ENCODE measurements at regions of chr7 and their contacts with region 1.

Region 1: GRCh38 chr7:130084037-130084875 is 13.9 kb downstream of the KLHDC10 start:
- DNase-seq: peak in 1 of 35 experiments; percentile 22
- ATAC-seq: no peak
- H3K4me3 ChIP-seq: no peak overlapping the region
- H3K4me3 Mint-ChIP-seq: no peak overlapping the region
- H3K27ac ChIP-seq: no peak overlapping the region
- H3K27ac Mint-ChIP-seq: no peak overlapping the region
- H3K4me1 ChIP-seq: no peaks in the 10 kb centered on the region
- H3K4me1 Mint-ChIP-seq: peaks cover 20 to 39% (median 28%) of the 10 kb centered on the region in 3 donors
- H3K27me3 ChIP-seq: no peaks in the 10 kb centered on the region
- H3K27me3 Mint-ChIP-seq: no peaks in the 10 kb centered on the region

Region 2: DNA sequence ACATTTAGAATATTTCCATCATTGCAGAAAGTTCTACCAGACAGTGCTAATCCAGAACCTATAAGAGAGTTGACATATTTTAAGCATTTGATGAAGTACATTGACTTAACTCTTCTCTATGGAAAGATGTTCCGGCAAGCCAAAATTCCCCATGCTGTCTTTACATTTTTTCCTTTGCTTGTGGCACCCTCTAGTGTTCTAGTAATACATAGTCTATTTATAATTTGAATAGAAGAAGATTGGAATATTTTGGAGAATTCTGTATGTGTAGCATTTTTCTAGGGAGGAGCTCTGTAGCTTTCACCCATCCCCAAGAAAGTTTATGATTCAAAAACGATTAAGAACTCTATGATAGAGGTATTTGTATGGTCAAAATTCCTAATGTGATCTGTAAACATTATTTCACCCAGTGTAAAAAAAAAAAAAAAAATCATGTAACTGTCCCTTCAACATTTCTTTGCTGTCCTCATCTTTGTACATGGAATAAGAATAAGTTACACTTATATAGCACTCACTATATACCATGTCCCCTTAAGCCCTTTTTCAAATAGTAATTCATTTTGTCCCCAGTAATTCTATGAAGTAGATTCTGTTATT is 439.5 kb before region 1 on chr7:
- CTCF ChIA-PET with region 1: no interaction called
- POLR2A ChIA-PET with region 1: interaction called in 1 of 2 experiments, 13 read pairs
- DNase-seq: peak in 1 of 35 experiments; percentile 43
- ATAC-seq: no peak
- H3K4me3 ChIP-seq: no peak overlapping the region
- H3K4me3 Mint-ChIP-seq: no peak overlapping the region
- H3K27ac ChIP-seq: no peak overlapping the region
- H3K27ac Mint-ChIP-seq: no peak overlapping the region
- H3K4me1 ChIP-seq: no peaks in the 10 kb centered on the region
- H3K4me1 Mint-ChIP-seq: peaks cover 20 to 37% (median 35%) of the 10 kb centered on the region in 3 donors
- H3K27me3 ChIP-seq: no peaks in the 10 kb centered on the region
- H3K27me3 Mint-ChIP-seq: no peaks in the 10 kb centered on the region

Region 3: DNA sequence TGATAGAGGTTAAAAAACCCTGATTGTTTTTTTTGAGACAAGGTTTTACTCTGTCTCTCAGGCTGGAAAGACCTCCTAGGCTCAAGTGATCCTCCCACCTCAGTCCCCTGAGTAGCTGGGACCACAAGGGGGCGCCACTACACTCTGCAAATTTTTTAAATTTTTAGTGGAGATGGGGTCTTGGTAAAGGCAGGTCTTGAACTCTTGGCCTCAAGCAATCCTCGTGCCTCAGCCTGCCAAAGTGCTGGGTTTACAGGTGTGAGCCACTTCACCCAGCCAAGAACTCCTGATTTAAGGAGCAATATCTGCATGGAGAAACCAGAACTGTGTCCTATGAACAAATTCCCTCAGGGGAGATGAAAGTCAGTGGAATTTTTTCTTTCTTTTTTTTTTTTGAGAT is 21.2 kb before region 1 on chr7:
- CTCF ChIA-PET with region 1: interaction called in 1 of 2 experiments, 12 read pairs
- POLR2A ChIA-PET with region 1: no interaction called
- DNase-seq: peak; percentile 7 to 74 (median 59)
- ATAC-seq: peak; percentile 43 to 72 (median 54)
- H3K4me3 ChIP-seq: no peak overlapping the region
- H3K4me3 Mint-ChIP-seq: no peak overlapping the region
- H3K27ac ChIP-seq: no peak overlapping the region
- H3K27ac Mint-ChIP-seq: no peak overlapping the region
- H3K4me1 ChIP-seq: no peaks in the 10 kb centered on the region
- H3K4me1 Mint-ChIP-seq: no peaks in the 10 kb centered on the region
- H3K27me3 ChIP-seq: peaks cover 0 to 42% of the 10 kb centered on the region in 2 experiments
- H3K27me3 Mint-ChIP-seq: peaks cover 0 to 16% of the 10 kb centered on the region in 2 donors

Region 4: GRCh38 chr7:130069978-130070860 is 14.0 kb before region 1 on chr7 and contains the start of gene KLHDC10:
- CTCF ChIA-PET with region 1: interaction called, 4 to 11 read pairs
- POLR2A ChIA-PET with region 1: no interaction called
- DNase-seq: peak; percentile 85 to 98 (median 96)
- ATAC-seq: peak; percentile 93 to 96 (median 94)
- H3K4me3 ChIP-seq: peak within 1 kb of the TSS; percentile 59 to 74
- H3K4me3 Mint-ChIP-seq: peak within 1 kb of the TSS; percentile 89 to 92 (median 91)
- H3K27ac ChIP-seq: peak within 1 kb of the TSS; percentile 77
- H3K27ac Mint-ChIP-seq: peak within 1 kb of the TSS; percentile 89 to 92
- H3K4me1 ChIP-seq: peaks cover 13 to 21% of the 10 kb centered on the region in 2 experiments
- H3K4me1 Mint-ChIP-seq: peaks cover 47 to 53% (median 48%) of the 10 kb centered on the region in 3 donors
- H3K27me3 ChIP-seq: peaks cover 0 to 13% of the 10 kb centered on the region in 2 experiments
- H3K27me3 Mint-ChIP-seq: no peaks in the 10 kb centered on the region
- total RNA-seq, gene KLHDC10: 15.2 to 20.5 (median 16.4) TPM

Region 5: DNA sequence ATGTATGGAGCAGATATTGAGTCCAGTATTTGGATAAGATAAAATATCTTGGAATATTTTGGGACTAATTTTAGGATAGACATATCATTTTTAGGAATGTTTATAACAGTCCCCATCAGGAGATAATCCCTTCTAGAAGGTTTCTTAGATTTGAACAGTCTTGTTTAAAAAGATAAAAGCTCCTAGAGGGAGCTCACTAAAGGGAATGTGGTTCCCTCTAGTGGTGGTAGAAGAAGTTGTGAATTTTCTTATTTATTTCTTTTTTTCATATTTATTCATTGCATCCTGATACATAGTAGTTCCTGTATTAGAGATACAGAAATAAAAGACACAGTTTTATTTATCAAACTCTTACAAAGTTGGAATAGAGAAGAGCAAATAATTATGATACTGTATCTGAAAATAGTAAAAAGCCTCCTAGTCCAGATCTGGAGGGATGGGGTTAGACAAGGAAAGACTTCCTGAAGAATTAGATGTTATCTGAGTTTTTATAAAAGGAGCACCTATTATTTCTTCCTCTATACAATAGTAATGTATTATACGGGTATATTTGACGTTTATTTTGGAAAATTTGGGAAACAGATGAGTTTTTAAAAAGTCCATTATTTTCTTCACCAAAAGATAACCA is 674.3 kb after region 1 on chr7:
- CTCF ChIA-PET with region 1: interaction called in 1 of 2 experiments, 11 read pairs
- POLR2A ChIA-PET with region 1: no interaction called
- DNase-seq: peak in 1 of 35 experiments; percentile 71
- ATAC-seq: peak in 2 of 4 experiments; percentile 36 to 45
- H3K4me3 ChIP-seq: no peak overlapping the region
- H3K4me3 Mint-ChIP-seq: no peak overlapping the region
- H3K27ac ChIP-seq: no peak overlapping the region
- H3K27ac Mint-ChIP-seq: no peak overlapping the region
- H3K4me1 ChIP-seq: no peaks in the 10 kb centered on the region
- H3K4me1 Mint-ChIP-seq: no peaks in the 10 kb centered on the region
- H3K27me3 ChIP-seq: no peaks in the 10 kb centered on the region
- H3K27me3 Mint-ChIP-seq: peaks cover 3 to 8% of the 10 kb centered on the region in 2 donors